ENCODE measurements at regions of chr22 and their contacts with region 1.

Region 1: GRCh38 chr22:29117799-29118477 is 45.1 kb downstream of the KREMEN1 start:
- DNase-seq: no peak

Region 2: GRCh38 chr22:29096736-29097669 is 20.9 kb before region 1 on chr22:
- intact Hi-C with region 1: loop called (anchors 2 kb)
- DNase-seq: peak in 1 of 10 donors; percentile 18

Measured in posterior cingulate gyrus (tissue), 11 donors.